Dorsolateral prefrontal cortex (tissue), 120 donors: ENCODE measurements at regions of chr17 and their contacts with region 1.

Region 1: DNA sequence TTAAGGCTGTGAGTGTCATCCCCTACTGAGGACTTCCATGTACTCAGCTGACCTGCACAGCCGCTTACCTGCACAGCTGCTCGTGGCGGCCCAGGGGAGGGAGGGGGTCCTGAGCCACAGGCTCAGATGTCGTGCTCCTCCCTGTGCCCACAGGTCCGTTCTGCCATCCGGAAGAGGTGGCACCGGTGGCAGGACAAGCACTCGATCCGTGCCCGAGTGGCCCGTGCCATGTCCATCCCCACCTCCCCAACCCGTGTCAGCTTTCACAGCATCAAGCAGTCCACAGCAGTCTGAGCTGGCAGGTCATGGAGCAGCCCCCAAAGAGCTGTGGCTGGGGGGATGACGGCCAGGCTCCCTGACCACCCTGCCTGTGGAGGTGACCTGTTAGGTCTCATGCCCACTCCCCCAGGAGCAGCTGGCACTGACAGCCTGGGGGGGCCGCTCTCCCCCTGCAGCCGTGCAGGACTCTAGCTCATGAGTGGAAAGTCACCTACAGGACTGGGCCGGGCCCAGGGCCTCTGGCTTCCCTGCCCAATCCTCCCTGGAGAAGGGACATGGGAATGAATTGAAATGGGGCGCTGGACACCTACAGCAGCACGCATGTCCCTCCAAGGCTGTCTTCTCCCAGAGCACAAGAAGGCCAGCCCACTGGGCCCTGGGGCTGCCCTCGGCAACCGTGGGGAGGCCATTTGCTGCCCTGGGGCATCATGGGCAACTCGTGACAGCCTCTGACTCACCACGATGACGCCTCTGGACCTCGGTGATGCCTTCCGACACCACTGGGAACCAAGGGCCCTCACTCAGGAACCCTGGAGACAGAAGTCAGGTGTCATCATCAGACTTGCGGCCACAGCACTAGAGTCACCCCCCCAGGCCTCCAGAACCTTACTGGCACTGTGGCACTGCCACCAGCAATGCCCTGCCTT is 9.9 kb upstream of the SPPL2C start:
- DNase-seq: no peak
- H3K4me3 ChIP-seq: no peak overlapping the region
- H3K27ac ChIP-seq: no peak overlapping the region
- H3K27me3 ChIP-seq: peaks cover 0 to 3% (median 0%) of the 10 kb centered on the region in 45 donors
- CTCF ChIP-seq: no peak

Region 2: DNA sequence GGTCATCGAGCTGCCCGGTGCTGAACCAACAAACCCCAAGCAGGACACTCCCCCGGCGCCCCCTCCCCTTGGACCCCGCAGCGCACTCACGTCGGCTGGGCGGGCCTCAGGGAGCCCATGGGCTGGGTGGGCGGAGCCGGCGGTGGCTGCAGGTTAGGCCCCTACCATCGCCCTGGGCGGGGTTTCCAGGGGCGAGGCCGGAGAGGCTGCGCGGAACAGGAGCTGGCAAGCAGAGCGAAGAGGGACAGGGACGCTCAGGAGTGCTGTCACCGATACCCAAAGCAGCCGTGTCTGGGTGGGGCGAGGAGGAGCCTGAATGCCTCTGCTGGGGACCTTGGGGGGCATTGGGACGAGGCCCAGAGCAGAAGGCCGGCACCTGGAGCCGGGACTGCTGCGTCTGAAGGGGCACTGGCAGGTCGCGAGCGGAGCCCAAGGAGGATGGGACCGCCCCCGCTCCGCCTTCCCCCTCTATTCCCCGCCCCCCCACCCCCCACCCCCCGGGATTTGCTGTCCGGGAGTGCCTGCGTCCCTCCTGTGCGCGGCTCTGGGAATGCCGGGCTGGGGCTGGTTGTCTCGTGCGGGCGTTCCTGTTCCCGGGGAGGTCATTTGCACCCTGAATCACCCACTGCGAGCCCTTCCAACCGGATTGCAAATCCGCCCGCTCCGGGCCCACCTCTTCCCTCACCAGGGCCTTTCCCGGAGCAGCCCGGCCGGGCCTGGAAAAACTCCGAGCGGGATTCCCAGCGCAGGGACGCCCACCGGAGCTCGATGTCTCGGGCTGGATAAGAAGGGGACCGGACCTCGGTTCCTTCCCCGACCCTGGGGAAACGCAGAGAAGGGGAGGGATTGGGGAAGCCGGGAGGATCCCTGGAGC is 403.0 kb before region 1 on chr17:
- intact Hi-C with region 1: loop called in 1 of 2 experiments (anchors 10 kb)
- DNase-seq: peak in 1 of 10 donors; percentile 17
- H3K4me3 ChIP-seq: peak overlapping the region; percentile 22 to 70 (median 50)
- H3K27ac ChIP-seq: peak overlapping the region in 25 of 59 donors; percentile 12 to 75 (median 41)
- H3K27me3 ChIP-seq: peaks cover 0 to 48% (median 27%) of the 10 kb centered on the region in 45 donors
- CTCF ChIP-seq: no peak

Region 3: GRCh38 chr17:45640141-45640850 is 194.4 kb before region 1 on chr17:
- intact Hi-C with region 1: loop called (anchors 2 to 5 kb)
- DNase-seq: peak; percentile 73 to 86 (median 80)
- H3K4me3 ChIP-seq: no peak overlapping the region
- H3K27ac ChIP-seq: peak overlapping the region in 3 of 59 donors; percentile 5 to 44 (median 35)
- H3K27me3 ChIP-seq: no peaks in the 10 kb centered on the region
- CTCF ChIP-seq: peak; percentile 85 to 98 (median 95)

Region 4: DNA sequence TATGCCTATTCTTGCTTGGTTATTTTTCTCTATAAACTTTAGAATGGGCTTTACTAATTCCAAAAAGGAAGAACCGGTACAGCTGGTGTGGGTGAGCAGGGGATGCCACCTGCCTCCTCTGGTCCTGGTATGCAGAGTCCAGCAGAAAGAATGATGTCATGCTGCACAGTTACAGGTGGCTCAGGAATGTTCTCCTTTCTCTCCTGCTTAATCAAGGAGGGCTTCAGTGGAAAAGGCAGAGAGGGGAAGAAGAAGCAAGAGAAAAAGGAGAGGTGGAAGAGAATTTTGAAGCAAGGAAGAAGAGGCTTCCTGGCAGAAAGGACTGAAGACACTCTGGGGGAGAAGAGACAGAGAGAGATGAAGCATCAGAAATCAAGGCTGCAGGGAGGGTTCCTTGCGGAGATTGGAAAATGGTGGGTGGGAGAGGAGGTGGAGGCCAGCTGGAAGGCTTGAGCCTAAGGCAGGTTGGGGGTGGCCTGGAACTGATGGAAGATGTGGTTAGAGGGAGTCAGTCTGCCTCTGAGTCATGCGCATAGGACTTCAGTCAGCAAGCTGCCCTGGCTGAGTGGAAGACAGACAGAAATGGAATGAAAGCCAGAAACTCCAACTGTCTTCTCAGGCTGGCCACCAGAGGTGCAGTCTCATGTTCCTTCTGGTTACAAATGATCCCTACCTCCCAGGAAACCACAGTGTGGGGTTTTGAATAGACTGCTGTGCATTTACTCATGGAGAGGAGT is 115.2 kb before region 1 on chr17:
- intact Hi-C with region 1: loop called (anchors 2 to 5 kb)
- DNase-seq: peak in 9 of 10 donors; percentile 34 to 80 (median 63)
- H3K4me3 ChIP-seq: no peak overlapping the region
- H3K27ac ChIP-seq: peak overlapping the region in 44 of 59 donors; percentile 5 to 87 (median 63)
- H3K27me3 ChIP-seq: no peaks in the 10 kb centered on the region
- CTCF ChIP-seq: peak in 22 of 56 donors; percentile 10 to 50 (median 27)

Region 5: GRCh38 chr17:45782889-45783592 is 51.7 kb before region 1 on chr17:
- intact Hi-C with region 1: loop called (anchors 2 kb)
- DNase-seq: peak in 6 of 10 donors; percentile 25 to 79 (median 61)
- H3K4me3 ChIP-seq: peak overlapping the region; percentile 40 to 84 (median 70)
- H3K27ac ChIP-seq: peak overlapping the region in 55 of 59 donors; percentile 7 to 93 (median 71)
- H3K27me3 ChIP-seq: peaks cover 0 to 27% (median 0%) of the 10 kb centered on the region in 45 donors
- CTCF ChIP-seq: peak; percentile 43 to 86 (median 78)